Caco-2 (cell line): ENCODE measurements at regions of chr17 and their contacts with region 1.

Region 1: DNA sequence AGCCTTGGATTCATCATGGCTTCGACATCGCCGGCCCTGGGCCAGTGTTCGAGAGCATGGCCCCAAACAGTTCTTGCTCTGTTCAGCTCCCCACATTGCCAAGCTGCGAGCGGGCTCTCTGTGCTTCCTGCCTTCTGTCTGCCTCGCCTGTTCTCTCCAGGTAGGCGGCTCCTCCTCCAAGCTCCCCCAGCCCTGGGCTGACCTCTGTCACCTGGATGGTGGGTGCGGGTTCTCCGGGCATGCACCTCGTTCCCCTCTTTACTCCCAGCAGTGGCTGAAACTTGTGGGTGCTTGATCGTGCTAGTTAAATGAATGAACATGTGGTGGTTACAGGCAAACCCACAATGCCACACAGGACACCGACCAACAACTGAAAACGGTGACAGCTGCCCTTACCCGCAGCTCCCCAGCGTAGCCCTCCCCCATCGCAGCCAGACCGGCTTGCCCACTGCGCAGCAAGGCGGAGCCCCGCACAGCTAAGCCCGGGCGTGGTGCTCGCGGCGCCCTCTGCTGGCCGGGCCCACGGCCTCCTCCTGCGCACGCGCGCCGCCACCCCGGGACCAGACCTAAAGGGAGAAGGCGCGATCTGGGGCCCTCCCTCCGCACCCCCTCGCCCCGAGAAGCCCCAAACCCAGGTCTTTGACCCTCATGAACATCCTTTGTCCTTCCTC is 23.0 kb upstream of the EIF1 start:
- DNase-seq: peak; percentile 89 to 96
- H3K4me3 ChIP-seq: peak overlapping the region; percentile 54
- H3K4me3 Mint-ChIP-seq: peak overlapping the region; percentile 83
- H3K27ac Mint-ChIP-seq: peak overlapping the region; percentile 78
- H3K4me1 ChIP-seq: peaks cover 11% of the 10 kb centered on the region
- H3K4me1 Mint-ChIP-seq: peaks cover 18% of the 10 kb centered on the region
- H3K27me3 ChIP-seq: no peaks in the 10 kb centered on the region
- H3K27me3 Mint-ChIP-seq: no peaks in the 10 kb centered on the region
- CTCF ChIP-seq: peak; percentile 81 to 97

Region 2: DNA sequence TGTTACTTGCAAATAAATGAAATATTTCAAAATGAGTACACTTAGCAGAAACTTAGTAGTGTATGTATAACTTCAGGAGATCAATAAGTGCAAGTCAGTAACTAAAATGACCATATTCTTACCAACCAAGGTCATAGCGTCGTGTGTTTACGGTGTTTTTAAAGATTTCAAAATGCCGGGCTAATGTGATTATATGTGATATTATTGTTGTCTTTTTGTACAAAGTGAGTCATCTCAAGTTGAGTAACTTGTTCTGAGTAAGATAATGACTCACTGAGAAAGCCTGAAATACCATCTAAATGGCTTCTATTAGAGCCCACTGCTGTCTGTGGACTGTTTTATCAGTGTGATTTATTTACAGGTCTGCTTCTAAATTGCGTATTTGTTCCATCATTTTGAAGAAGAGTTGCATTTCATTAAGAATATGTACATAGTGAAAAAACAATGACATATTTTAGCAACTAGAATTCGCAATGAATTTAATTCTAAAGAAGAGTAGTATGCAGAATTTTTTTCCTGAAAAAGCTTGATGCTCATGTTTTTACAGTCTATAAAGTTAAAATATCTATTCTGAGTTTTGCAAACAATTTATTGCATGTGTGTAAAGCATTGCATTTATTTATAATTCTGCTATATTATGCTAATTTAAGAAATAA is 811.4 kb before region 1 on chr17:
- CTCF ChIA-PET with region 1: interaction called, 10 read pairs
- POLR2A ChIA-PET with region 1: no interaction called
- intact Hi-C with region 1: loop called (anchors 5 kb)
- DNase-seq: no peak
- H3K4me3 ChIP-seq: no peak overlapping the region
- H3K4me3 Mint-ChIP-seq: no peak overlapping the region
- H3K27ac Mint-ChIP-seq: no peak overlapping the region
- H3K4me1 ChIP-seq: peaks cover 13% of the 10 kb centered on the region
- H3K4me1 Mint-ChIP-seq: peaks cover 19% of the 10 kb centered on the region
- H3K27me3 ChIP-seq: no peaks in the 10 kb centered on the region
- H3K27me3 Mint-ChIP-seq: no peaks in the 10 kb centered on the region
- CTCF ChIP-seq: no peak

Region 3: DNA sequence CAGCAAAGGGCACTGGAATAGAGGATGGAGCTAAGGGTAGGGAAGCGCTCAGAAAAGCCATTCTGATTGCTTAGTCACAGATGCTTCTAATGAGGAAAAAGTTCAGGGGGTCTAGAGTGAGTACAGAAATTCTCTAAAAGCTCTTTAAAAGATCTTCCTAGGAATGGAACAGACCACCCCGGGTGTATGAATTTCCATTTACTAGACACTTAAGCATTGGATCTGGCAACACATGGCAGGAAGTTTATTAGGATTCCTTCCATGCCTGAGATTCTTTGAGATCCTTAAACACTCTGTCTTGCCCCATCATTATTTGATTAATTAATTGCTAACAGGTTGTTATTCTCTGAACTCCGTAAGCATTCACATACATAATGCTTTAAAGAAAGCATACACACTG is 381.7 kb before region 1 on chr17:
- CTCF ChIA-PET with region 1: interaction called, 11 read pairs
- POLR2A ChIA-PET with region 1: no interaction called
- intact Hi-C with region 1: no loop called
- DNase-seq: peak in 1 of 2 experiments; percentile 22
- H3K4me3 ChIP-seq: no peak overlapping the region
- H3K4me3 Mint-ChIP-seq: no peak overlapping the region
- H3K27ac Mint-ChIP-seq: no peak overlapping the region
- H3K4me1 ChIP-seq: peaks cover 31% of the 10 kb centered on the region
- H3K4me1 Mint-ChIP-seq: peaks cover 34% of the 10 kb centered on the region
- H3K27me3 ChIP-seq: no peaks in the 10 kb centered on the region
- H3K27me3 Mint-ChIP-seq: no peaks in the 10 kb centered on the region
- CTCF ChIP-seq: no peak

Region 4: DNA sequence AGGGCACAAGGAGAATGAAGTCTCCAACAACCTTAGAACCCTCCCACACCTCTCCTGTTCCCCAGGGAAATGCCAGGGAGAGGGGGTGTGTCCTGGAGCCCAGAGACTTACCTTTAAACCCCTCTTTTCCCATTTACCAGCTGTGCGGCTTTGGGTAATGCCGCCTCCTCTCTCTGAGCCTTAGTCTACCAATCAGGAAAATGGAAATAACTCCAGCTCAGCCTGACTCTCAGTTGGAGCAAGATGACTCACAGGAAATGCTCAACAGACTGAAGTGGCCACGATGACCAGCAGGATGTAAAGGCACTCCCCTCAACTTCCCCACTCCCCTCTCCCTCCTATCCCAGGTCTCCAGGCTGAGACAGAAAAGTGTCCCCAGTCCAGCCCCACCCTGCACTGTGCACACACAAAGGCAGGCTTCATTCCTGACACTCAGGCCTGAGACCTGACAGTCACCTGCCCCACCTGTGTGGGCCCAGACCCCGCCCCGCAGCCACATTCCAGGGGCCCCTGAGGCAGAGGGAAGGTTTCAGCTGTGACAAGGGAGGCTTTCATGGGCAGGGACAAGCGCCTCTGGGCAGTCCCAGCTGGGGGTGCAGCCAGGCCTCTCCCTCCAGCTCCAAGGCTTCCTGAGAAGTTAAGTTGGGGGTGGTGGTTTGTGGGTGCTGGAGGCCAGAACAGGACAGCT is 144.0 kb before region 1 on chr17:
- CTCF ChIA-PET with region 1: interaction called, 13 read pairs
- POLR2A ChIA-PET with region 1: no interaction called
- intact Hi-C with region 1: no loop called
- DNase-seq: peak; percentile 97 to 99
- H3K4me3 ChIP-seq: no peak overlapping the region
- H3K4me3 Mint-ChIP-seq: peak overlapping the region; percentile 68
- H3K27ac Mint-ChIP-seq: peak overlapping the region; percentile 97
- H3K4me1 ChIP-seq: peaks cover 66% of the 10 kb centered on the region
- H3K4me1 Mint-ChIP-seq: peaks cover 51% of the 10 kb centered on the region
- H3K27me3 ChIP-seq: no peaks in the 10 kb centered on the region
- H3K27me3 Mint-ChIP-seq: no peaks in the 10 kb centered on the region
- CTCF ChIP-seq: no peak

Region 5: DNA sequence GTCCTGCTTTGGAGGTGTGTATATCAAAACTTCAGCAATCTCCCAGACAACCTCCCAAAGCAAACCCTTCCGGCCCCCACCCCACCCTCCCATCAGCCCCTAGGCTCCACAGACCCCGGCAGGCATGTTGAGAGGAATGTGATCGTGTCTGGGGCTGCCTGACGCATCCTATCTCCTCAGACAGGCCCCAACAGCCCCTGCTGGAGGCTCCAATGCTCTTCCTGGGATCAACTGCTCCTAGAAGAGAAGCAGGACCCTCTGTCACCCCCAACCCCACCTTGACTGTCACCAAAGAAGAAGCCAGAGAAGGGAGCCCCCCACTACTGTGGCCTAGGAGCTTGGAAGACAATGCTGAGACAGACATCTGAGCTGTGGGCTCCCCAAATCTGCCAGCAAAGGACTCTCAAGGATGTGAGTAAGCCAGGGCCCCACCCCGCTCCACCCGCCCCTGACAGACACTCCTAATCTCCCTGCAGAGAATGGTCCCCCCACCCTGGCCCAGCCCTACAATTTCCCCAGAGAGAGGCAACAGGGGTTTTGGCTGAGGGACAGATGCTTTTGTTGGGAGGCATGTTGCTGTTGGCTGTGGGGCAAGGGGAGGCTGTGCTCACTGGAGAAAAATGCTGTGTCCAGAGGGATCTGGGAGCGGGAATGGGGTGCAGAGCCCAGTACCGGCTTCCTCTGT is 77.4 kb before region 1 on chr17:
- CTCF ChIA-PET with region 1: no interaction called
- POLR2A ChIA-PET with region 1: no interaction called
- intact Hi-C with region 1: no loop called
- DNase-seq: no peak
- H3K4me3 ChIP-seq: no peak overlapping the region
- H3K4me3 Mint-ChIP-seq: no peak overlapping the region
- H3K27ac Mint-ChIP-seq: no peak overlapping the region
- H3K4me1 ChIP-seq: no peaks in the 10 kb centered on the region
- H3K4me1 Mint-ChIP-seq: no peaks in the 10 kb centered on the region
- H3K27me3 ChIP-seq: no peaks in the 10 kb centered on the region
- H3K27me3 Mint-ChIP-seq: no peaks in the 10 kb centered on the region
- CTCF ChIP-seq: no peak

Region 6: DNA sequence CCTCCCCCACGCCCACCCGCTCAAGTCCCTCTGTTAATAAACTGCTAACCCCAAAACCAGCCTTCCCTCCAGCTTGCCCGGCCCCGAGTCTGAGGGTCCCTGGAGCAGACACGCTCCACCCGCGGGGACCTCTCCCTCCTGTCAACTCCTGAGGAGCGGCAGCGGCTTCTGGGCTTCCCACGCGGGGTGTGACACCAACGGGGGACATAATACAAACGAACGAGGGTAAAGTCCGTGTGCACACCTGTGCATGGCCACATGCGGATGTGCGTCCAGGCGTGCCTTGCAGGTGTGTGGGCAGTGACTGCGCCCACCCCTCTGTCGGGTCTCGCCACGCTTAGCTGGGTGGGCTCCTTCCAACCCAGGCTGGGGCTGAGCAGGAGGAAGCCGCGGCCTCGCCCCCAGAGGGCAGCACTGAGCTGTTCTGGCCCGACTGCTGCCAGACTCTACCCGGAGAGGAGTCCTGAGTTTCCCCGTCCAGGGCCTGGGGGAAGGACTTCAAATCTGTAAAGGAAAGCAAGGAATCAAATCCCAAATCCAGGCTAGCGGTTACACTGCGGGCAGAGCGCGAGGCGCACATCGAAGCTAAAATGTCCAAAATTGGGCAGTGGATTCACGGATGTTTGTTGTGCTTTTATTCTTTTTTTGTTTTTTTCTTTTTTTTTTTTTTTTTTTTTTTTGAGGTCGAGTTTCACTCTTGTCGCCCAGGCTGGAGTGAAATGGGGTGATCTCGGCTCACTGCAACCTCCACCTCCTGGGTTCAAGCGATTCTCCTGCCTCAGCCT is 17.1 kb before region 1 on chr17:
- CTCF ChIA-PET with region 1: interaction called, 147 read pairs
- POLR2A ChIA-PET with region 1: interaction called, 6 read pairs
- intact Hi-C with region 1: loop called (anchors 1 kb)
- DNase-seq: peak; percentile 89 to 94
- H3K4me3 ChIP-seq: peak overlapping the region; percentile 47
- H3K4me3 Mint-ChIP-seq: peak overlapping the region; percentile 81
- H3K27ac Mint-ChIP-seq: peak overlapping the region; percentile 36
- H3K4me1 ChIP-seq: peaks cover 35% of the 10 kb centered on the region
- H3K4me1 Mint-ChIP-seq: peaks cover 7% of the 10 kb centered on the region
- H3K27me3 ChIP-seq: no peaks in the 10 kb centered on the region
- H3K27me3 Mint-ChIP-seq: no peaks in the 10 kb centered on the region
- CTCF ChIP-seq: peak; percentile 95 to 96

Region 7: GRCh38 chr17:41688699-41689496 is 23.2 kb after region 1 on chr17 and contains the start of gene EIF1:
- CTCF ChIA-PET with region 1: interaction called, 34 read pairs
- POLR2A ChIA-PET with region 1: interaction called, 24 read pairs
- intact Hi-C with region 1: no loop called
- DNase-seq: peak; percentile 100
- H3K4me3 ChIP-seq: peak within 1 kb of the TSS; percentile 90
- H3K4me3 Mint-ChIP-seq: peak within 1 kb of the TSS; percentile 99
- H3K27ac Mint-ChIP-seq: peak within 1 kb of the TSS; percentile 97
- H3K4me1 ChIP-seq: peaks cover 8% of the 10 kb centered on the region; the same call in 1 of the 2 replicates
- H3K4me1 Mint-ChIP-seq: peaks cover 14% of the 10 kb centered on the region
- H3K27me3 ChIP-seq: no peaks in the 10 kb centered on the region
- H3K27me3 Mint-ChIP-seq: no peaks in the 10 kb centered on the region
- CTCF ChIP-seq: no peak
- total RNA-seq, gene EIF1: 759 and 783 TPM in 2 replicates

Region 8: DNA sequence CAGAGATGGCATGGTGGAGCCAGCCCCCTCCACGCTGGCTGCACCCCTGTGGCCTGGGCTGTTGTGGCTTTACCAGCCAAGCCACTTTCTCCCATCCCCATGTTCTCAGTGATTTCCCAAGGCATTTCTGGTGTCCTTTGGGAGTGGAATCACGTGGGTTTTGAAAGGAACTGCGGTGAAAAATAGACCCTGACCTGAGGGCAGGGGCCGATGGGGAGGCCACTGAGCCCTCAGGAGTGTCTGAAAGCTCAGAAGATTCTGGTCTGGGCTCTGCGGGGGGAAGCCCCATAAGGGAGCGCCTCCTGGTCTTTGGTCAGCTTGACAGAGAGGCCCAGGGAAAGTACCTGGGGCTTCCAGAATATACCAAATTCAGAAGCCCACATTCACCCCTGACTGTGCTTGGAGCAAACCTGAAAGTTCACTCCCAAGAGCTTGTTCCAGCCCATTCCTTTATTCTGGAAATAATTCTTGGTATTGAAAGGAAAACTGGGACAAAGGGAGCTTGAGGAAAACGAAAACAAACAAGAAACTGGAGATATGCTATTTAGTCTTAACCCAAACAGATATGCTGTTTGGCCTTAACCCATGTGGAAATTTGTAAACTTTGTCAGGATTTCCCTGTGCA is 847.0 kb after region 1 on chr17:
- CTCF ChIA-PET with region 1: no interaction called
- POLR2A ChIA-PET with region 1: no interaction called
- intact Hi-C with region 1: no loop called
- DNase-seq: no peak
- H3K4me3 ChIP-seq: no peak overlapping the region
- H3K4me3 Mint-ChIP-seq: no peak overlapping the region
- H3K27ac Mint-ChIP-seq: no peak overlapping the region
- H3K4me1 ChIP-seq: peaks cover 3% of the 10 kb centered on the region
- H3K4me1 Mint-ChIP-seq: no peaks in the 10 kb centered on the region
- H3K27me3 ChIP-seq: no peaks in the 10 kb centered on the region
- H3K27me3 Mint-ChIP-seq: no peaks in the 10 kb centered on the region
- CTCF ChIP-seq: no peak